CD4-positive, alpha-beta memory T cell (primary cell): ENCODE measurements at regions of chr21 and their contacts with region 1.

Region 1: GRCh38 chr21:44892536-44893277 is 19.2 kb upstream of the PTTG1IP start:
- DNase-seq: peak; percentile 64 to 80 (median 76)
- H3K4me3 ChIP-seq: no peak overlapping the region
- H3K4me3 Mint-ChIP-seq: peak overlapping the region in 1 of 8 donors; percentile 35
- H3K27ac ChIP-seq: no peak overlapping the region
- H3K27ac Mint-ChIP-seq: peak overlapping the region in 6 of 7 donors; percentile 64 to 92 (median 85)
- H3K4me1 ChIP-seq: peaks cover 19% of the 10 kb centered on the region
- H3K4me1 Mint-ChIP-seq: peaks cover 10 to 29% (median 14%) of the 10 kb centered on the region in 4 donors
- H3K27me3 ChIP-seq: no peaks in the 10 kb centered on the region
- H3K27me3 Mint-ChIP-seq: no peaks in the 10 kb centered on the region

Region 2: DNA sequence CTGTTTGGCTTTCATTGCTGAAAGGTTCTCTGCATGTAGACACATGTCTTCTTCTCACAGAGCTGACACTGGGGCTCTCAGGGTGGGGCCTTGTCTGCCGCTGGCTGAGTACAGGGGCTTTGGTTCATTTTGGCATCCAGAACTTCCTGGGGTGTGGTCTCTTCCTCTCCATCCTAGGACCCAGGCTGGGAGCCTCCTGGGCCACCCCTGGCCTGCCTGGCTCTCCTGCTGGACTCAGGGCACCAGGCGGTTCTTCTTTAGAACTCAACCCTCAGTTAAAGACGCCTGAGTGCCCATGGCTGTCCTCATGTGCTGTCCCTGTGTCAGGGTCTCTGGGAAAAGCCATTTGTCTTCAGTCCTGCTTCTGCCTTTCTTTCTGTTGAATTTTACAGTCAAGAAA is 306.8 kb before region 1 on chr21:
- CTCF ChIA-PET with region 1: no interaction called
- POLR2A ChIA-PET with region 1: no interaction called
- intact Hi-C with region 1: no loop called
- DNase-seq: no peak
- H3K4me3 ChIP-seq: no peak overlapping the region
- H3K4me3 Mint-ChIP-seq: no peak overlapping the region
- H3K27ac ChIP-seq: no peak overlapping the region
- H3K27ac Mint-ChIP-seq: peak overlapping the region in 1 of 7 donors; percentile 18
- H3K4me1 ChIP-seq: peaks cover 5% of the 10 kb centered on the region
- H3K4me1 Mint-ChIP-seq: peaks cover 12 to 21% (median 14%) of the 10 kb centered on the region in 4 donors
- H3K27me3 ChIP-seq: no peaks in the 10 kb centered on the region
- H3K27me3 Mint-ChIP-seq: peaks cover 14 to 15% of the 10 kb centered on the region in 2 donors

Region 3: DNA sequence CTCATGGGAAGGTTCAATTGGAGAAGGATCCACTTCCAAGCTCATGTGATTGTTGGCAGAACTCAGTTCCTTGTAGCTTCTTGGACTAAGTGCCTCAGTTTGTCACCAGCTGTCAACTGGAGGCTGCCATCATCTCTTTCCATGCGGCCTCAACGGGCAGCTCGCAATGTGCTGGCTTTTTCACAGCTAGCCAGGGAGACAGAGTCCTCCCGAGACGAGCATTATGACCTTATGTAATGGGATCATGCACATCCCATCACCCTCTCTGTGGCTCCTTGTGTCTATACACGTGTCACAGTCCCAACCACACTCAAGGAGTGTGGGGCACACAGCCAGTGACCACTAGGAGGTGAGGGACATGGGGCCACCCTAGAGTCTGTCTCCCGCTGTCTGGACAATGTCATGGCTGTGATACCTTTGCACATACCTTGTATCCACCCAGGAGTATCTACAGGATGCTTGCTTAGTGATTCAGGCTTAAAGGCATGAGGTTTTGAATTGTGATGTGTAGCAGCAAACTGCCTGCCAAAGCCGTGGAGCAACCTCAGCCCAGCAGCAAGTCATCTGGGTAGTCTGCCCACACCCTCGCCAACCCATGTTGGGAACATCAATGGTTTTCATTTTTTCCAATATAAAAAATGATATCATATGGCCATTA is 296.5 kb before region 1 on chr21:
- CTCF ChIA-PET with region 1: no interaction called
- POLR2A ChIA-PET with region 1: no interaction called
- intact Hi-C with region 1: no loop called
- DNase-seq: no peak
- H3K4me3 ChIP-seq: no peak overlapping the region
- H3K4me3 Mint-ChIP-seq: no peak overlapping the region
- H3K27ac ChIP-seq: no peak overlapping the region
- H3K27ac Mint-ChIP-seq: no peak overlapping the region
- H3K4me1 ChIP-seq: no peaks in the 10 kb centered on the region
- H3K4me1 Mint-ChIP-seq: peaks cover 0 to 8% (median 3%) of the 10 kb centered on the region in 4 donors
- H3K27me3 ChIP-seq: no peaks in the 10 kb centered on the region
- H3K27me3 Mint-ChIP-seq: peaks cover 2 to 12% of the 10 kb centered on the region in 2 donors

Region 4: DNA sequence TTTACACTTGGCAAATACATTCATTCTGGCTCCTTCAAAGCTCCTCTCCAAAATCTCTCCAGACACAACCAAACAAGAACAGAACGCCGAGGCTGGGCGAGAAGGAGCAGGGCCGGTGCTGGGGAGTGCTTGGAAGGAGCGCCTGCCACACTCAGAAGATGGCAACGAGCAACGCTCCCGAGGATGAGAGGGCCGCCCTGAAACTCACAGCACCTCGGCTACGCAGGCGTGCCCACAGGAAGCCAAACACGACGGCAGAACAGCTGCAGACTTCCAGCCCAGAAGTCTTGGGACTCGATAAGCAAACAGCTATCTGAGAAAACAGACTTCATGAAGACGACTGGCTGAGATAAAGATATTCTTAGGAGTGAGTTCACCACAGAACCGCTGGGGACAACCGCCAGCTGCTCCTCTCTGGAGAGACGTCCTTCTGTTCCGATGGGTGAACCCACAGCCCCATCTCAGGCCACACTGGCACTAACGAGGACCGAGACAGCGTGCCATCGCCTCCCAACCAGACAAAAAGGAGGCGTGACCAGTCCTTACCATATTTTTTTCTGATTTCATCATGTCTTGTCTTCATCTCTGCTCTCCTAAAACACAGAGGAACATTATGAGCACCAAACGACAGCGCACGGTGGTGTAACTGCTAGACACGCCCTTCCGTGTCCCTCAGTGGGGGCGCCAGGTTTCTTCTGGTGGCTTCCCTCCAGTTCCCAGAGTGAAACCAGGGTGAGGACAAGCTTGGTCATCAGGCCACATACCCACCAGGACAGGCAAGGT is 37.9 kb before region 1 on chr21:
- CTCF ChIA-PET with region 1: no interaction called
- POLR2A ChIA-PET with region 1: no interaction called
- intact Hi-C with region 1: no loop called
- DNase-seq: no peak
- H3K4me3 ChIP-seq: no peak overlapping the region
- H3K4me3 Mint-ChIP-seq: peak overlapping the region in 1 of 8 donors; percentile 46
- H3K27ac ChIP-seq: no peak overlapping the region
- H3K27ac Mint-ChIP-seq: peak overlapping the region in 6 of 7 donors; percentile 7 to 92 (median 71)
- H3K4me1 ChIP-seq: peaks cover 33% of the 10 kb centered on the region
- H3K4me1 Mint-ChIP-seq: peaks cover 17 to 64% (median 41%) of the 10 kb centered on the region in 4 donors
- H3K27me3 ChIP-seq: no peaks in the 10 kb centered on the region
- H3K27me3 Mint-ChIP-seq: no peaks in the 10 kb centered on the region

Region 5: GRCh38 chr21:44880762-44881585 is 11.7 kb before region 1 on chr21:
- CTCF ChIA-PET with region 1: interaction called, 15 read pairs
- POLR2A ChIA-PET with region 1: interaction called, 25 read pairs
- intact Hi-C with region 1: no loop called
- DNase-seq: peak in 1 of 5 donors; percentile 79
- H3K4me3 ChIP-seq: no peak overlapping the region
- H3K4me3 Mint-ChIP-seq: peak overlapping the region in 4 of 8 donors; percentile 6 to 45 (median 26)
- H3K27ac ChIP-seq: peak overlapping the region; percentile 20
- H3K27ac Mint-ChIP-seq: peak overlapping the region; percentile 9 to 88 (median 76)
- H3K4me1 ChIP-seq: peaks cover 28% of the 10 kb centered on the region
- H3K4me1 Mint-ChIP-seq: peaks cover 17 to 33% (median 23%) of the 10 kb centered on the region in 4 donors
- H3K27me3 ChIP-seq: no peaks in the 10 kb centered on the region
- H3K27me3 Mint-ChIP-seq: no peaks in the 10 kb centered on the region

Region 6: GRCh38 chr21:44911389-44912157 is 18.9 kb after region 1 on chr21:
- CTCF ChIA-PET with region 1: interaction called, 32 read pairs
- POLR2A ChIA-PET with region 1: interaction called, 21 read pairs
- intact Hi-C with region 1: loop called (anchors 1 kb)
- DNase-seq: peak; percentile 72 to 80 (median 79)
- H3K4me3 ChIP-seq: peak overlapping the region; percentile 42 to 43
- H3K4me3 Mint-ChIP-seq: peak overlapping the region; percentile 63 to 90 (median 83)
- H3K27ac ChIP-seq: peak overlapping the region; percentile 61
- H3K27ac Mint-ChIP-seq: peak overlapping the region; percentile 88 to 98 (median 94)
- H3K4me1 ChIP-seq: peaks cover 92% of the 10 kb centered on the region
- H3K4me1 Mint-ChIP-seq: peaks cover 35 to 80% (median 54%) of the 10 kb centered on the region in 4 donors
- H3K27me3 ChIP-seq: no peaks in the 10 kb centered on the region
- H3K27me3 Mint-ChIP-seq: no peaks in the 10 kb centered on the region

Region 7: GRCh38 chr21:44920694-44921604 is 28.2 kb after region 1 on chr21 and contains the start of gene ITGB2:
- CTCF ChIA-PET with region 1: interaction called, 253 read pairs
- POLR2A ChIA-PET with region 1: interaction called, 267 read pairs
- intact Hi-C with region 1: no loop called
- DNase-seq: peak; percentile 48 to 74 (median 55)
- H3K4me3 ChIP-seq: peak within 1 kb of the TSS; percentile 94 to 98
- H3K4me3 Mint-ChIP-seq: peak within 1 kb of the TSS; percentile 95 to 100 (median 100)
- H3K27ac ChIP-seq: peak within 1 kb of the TSS; percentile 75
- H3K27ac Mint-ChIP-seq: peak within 1 kb of the TSS; percentile 93 to 98 (median 97)
- H3K4me1 ChIP-seq: peaks cover 76% of the 10 kb centered on the region
- H3K4me1 Mint-ChIP-seq: peaks cover 49 to 90% (median 67%) of the 10 kb centered on the region in 4 donors
- H3K27me3 ChIP-seq: no peaks in the 10 kb centered on the region
- H3K27me3 Mint-ChIP-seq: no peaks in the 10 kb centered on the region
- total RNA-seq, gene ITGB2: 278 to 291 TPM